Activated CD8-positive, alpha-beta T cell treated with anti-CD3 and anti-CD28 coated beads, Interleukin-2, amount 10 ng/mL, durations not matched to agents 7 days and 5 days (primary cell): ENCODE measurements at regions of chr11 and their contacts with region 1.

Region 1: GRCh38 chr11:19259487-19260345 is 19.0 kb upstream of the E2F8 start:
- DNase-seq: peak; percentile 77
- ATAC-seq: no peak
- H3K4me3 Mint-ChIP-seq: no peak overlapping the region
- H3K27ac Mint-ChIP-seq: no peak overlapping the region
- H3K4me1 Mint-ChIP-seq: no peaks in the 10 kb centered on the region
- H3K27me3 Mint-ChIP-seq: peaks cover 14% of the 10 kb centered on the region

Region 2: GRCh38 chr11:19071255-19071654 is 188.5 kb before region 1 on chr11:
- CTCF ChIA-PET with region 1: interaction called, 11 read pairs
- POLR2A ChIA-PET with region 1: no interaction called
- DNase-seq: peak; percentile 69
- ATAC-seq: peak; percentile 95
- H3K4me3 Mint-ChIP-seq: no peak overlapping the region
- H3K27ac Mint-ChIP-seq: no peak overlapping the region
- H3K4me1 Mint-ChIP-seq: no peaks in the 10 kb centered on the region
- H3K27me3 Mint-ChIP-seq: peaks cover 19% of the 10 kb centered on the region

Region 3: DNA sequence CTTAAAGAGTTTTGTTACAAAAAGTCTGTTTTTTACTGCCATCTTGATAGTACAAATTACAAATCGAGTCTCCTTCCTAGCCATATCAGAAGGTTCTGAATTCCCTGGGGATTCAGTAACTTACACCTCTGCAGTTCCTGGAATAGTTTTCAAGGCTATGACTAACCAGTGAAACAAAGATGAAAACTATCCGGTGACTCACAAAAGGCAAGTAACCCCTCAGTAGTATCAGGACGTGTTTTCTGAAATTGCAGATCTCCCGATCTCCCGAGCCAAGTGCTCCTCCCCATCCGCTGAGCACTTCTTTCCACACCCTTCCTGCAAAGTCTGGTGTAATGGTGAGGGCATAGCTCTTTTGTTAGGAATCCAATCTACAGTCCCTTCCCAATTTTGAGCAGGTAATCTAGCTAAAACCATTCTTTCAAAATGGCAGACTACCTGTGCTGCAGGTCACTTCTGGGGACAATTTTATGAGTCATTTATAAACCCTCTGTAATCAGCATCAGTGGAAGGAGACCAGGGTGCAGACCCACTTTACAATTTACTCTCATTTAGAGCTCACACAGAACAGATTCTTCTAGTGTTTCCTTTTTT is 26.7 kb before region 1 on chr11:
- CTCF ChIA-PET with region 1: no interaction called
- POLR2A ChIA-PET with region 1: no interaction called
- DNase-seq: no peak
- ATAC-seq: no peak
- H3K4me3 Mint-ChIP-seq: no peak overlapping the region
- H3K27ac Mint-ChIP-seq: no peak overlapping the region
- H3K4me1 Mint-ChIP-seq: no peaks in the 10 kb centered on the region
- H3K27me3 Mint-ChIP-seq: no peaks in the 10 kb centered on the region

Region 4: DNA sequence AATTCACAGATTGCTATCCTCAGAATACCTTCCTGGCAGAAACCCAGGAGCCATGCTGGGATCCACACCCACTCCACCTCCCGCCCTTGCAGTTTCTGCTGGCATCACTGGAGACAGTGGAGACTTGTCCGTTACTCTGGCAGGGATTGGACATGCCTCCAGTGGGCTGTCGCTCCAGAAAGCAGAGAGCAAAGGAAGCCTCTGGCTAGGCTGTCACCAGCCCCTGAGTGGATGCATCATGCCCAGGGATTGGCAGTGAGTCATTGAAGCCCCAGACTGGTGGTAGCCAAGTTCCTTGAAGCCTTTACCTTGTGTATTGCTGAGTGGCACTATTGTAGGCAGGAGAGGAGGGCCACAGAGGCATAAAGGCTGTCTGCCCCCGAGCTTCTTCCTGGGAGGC is 15.8 kb after region 1 on chr11:
- CTCF ChIA-PET with region 1: interaction called, 10 read pairs
- POLR2A ChIA-PET with region 1: no interaction called
- DNase-seq: no peak
- ATAC-seq: no peak
- H3K4me3 Mint-ChIP-seq: no peak overlapping the region
- H3K27ac Mint-ChIP-seq: no peak overlapping the region
- H3K4me1 Mint-ChIP-seq: no peaks in the 10 kb centered on the region
- H3K27me3 Mint-ChIP-seq: peaks cover 12% of the 10 kb centered on the region

Region 5: DNA sequence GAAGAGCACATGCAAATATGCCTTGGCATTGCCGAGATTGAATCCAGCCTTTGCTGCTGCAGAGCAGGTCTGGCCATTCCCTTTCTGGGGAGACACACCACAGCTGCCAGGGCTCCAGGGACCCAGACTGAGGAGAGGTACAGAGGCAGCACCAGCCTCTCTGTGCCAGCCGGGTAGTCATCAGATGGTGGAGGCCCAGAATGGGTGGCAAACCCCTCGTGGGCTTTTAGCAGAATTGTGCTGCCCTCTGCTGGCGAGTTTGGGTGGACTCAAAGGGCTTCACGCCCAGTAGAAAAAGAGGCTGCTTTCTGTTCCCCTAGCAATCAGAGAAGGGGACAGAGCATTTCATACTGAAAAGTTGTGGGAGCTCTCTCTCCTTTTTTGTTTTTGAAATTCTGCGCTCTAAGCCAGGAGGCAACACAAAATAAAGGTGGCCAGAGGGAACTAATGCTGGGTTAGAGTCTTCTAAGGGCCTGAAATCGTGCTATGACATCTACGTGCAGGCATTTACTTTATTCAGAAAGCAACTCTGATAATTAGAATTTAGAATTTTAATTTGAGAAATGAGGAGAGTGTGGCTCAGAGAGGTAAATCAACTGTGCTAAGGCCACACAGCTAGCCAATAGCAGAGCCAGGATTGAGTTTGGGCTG is 294.1 kb after region 1 on chr11:
- CTCF ChIA-PET with region 1: interaction called, 16 read pairs
- POLR2A ChIA-PET with region 1: no interaction called
- DNase-seq: peak; percentile 76
- ATAC-seq: peak; percentile 76
- H3K4me3 Mint-ChIP-seq: no peak overlapping the region
- H3K27ac Mint-ChIP-seq: no peak overlapping the region
- H3K4me1 Mint-ChIP-seq: no peaks in the 10 kb centered on the region
- H3K27me3 Mint-ChIP-seq: peaks cover 2% of the 10 kb centered on the region